ENCODE measurements at regions of chr15 and their contacts with region 1.

Region 1: GRCh38 chr15:54033869-54034458 is 55.7 kb downstream of the UNC13C start:
- DNase-seq: no peak
- ATAC-seq: no peak

Region 2: GRCh38 chr15:53586799-53587198 is 447.2 kb before region 1 on chr15:
- intact Hi-C with region 1: loop called (anchors 10 kb)
- DNase-seq: no peak
- ATAC-seq: no peak

Measured in sciatic nerve (tissue), 2 donors.